ENCODE measurements at regions of chr11 and their contacts with region 1.

Region 1: GRCh38 chr11:35617687-35618496 is at the start of gene FJX1:
- H3K4me3 Mint-ChIP-seq: peak within 1 kb of the TSS; percentile 74
- H3K27ac Mint-ChIP-seq: peak within 1 kb of the TSS; percentile 60
- H3K4me1 Mint-ChIP-seq: peaks cover 18% of the 10 kb centered on the region
- H3K27me3 Mint-ChIP-seq: peaks cover 66% of the 10 kb centered on the region

Region 2: DNA sequence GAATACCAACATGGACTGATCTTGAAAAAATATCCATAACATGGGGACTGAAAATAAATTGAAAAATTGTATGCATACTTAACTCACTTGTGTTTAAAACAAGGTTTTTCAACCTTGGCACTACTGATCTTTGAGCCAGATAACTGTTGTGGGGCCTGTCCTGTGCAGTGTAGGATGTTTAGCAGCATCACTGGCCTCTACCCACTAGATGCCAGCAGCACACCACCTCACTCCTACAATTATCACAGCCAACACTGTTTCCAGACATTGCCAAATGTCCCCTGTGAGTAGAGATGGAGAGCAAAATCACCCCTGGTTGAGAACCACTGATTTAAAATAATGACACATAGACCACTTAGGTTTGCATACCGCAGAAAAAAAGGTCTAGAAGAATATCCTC is 153.6 kb before region 1 on chr11:
- intact Hi-C with region 1: no loop called
- H3K4me3 Mint-ChIP-seq: no peak overlapping the region
- H3K27ac Mint-ChIP-seq: no peak overlapping the region
- H3K4me1 Mint-ChIP-seq: no peaks in the 10 kb centered on the region
- H3K27me3 Mint-ChIP-seq: peaks cover 13% of the 10 kb centered on the region

Region 3: DNA sequence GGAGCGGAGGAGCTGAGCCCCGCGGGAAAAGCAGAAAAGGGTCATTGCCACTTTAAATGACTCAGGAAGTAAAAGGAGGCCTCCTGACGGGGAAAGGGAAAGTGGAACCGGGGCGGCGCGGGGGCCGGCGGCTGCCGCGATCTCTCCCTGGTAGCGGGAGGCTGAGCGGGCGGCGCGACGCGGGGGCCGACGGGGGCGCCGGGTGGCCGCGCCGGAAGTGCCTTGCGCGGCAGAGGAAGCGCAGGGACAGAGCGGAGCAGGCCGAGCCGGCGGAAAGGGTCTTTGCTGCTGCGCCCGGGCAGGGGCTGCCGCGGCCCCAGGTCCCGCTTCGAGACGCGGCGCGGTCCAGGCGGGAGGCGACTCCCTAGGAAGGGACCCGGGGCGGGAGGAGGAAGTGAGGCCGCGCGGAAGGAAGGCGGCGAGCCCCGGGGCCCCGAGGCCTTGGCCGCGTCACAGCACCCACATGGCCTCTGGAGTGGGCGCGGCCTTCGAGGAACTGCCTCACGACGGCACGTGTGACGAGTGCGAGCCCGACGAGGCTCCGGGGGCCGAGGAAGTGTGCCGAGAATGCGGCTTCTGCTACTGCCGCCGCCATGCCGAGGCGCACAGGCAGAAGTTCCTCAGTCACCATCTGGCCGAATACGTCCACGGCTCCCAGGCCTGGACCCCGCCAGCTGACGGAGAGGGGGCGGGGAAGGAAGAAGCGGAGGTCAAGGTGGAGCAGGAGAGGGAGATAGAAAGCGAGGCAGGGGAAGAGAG is 44.9 kb after region 1 on chr11 and contains the start of gene TRIM44:
- intact Hi-C with region 1: loop called (anchors 5 kb)
- H3K4me3 Mint-ChIP-seq: peak within 1 kb of the TSS; percentile 87
- H3K27ac Mint-ChIP-seq: peak within 1 kb of the TSS; percentile 91
- H3K4me1 Mint-ChIP-seq: peaks cover 34% of the 10 kb centered on the region
- H3K27me3 Mint-ChIP-seq: peaks cover 18% of the 10 kb centered on the region

Region 4: GRCh38 chr11:36056160-36056751 is 438.4 kb after region 1 on chr11:
- intact Hi-C with region 1: loop called (anchors 5 kb)
- H3K4me3 Mint-ChIP-seq: no peak overlapping the region
- H3K27ac Mint-ChIP-seq: no peak overlapping the region
- H3K4me1 Mint-ChIP-seq: peaks cover 13% of the 10 kb centered on the region
- H3K27me3 Mint-ChIP-seq: peaks cover 4% of the 10 kb centered on the region

Region 5: DNA sequence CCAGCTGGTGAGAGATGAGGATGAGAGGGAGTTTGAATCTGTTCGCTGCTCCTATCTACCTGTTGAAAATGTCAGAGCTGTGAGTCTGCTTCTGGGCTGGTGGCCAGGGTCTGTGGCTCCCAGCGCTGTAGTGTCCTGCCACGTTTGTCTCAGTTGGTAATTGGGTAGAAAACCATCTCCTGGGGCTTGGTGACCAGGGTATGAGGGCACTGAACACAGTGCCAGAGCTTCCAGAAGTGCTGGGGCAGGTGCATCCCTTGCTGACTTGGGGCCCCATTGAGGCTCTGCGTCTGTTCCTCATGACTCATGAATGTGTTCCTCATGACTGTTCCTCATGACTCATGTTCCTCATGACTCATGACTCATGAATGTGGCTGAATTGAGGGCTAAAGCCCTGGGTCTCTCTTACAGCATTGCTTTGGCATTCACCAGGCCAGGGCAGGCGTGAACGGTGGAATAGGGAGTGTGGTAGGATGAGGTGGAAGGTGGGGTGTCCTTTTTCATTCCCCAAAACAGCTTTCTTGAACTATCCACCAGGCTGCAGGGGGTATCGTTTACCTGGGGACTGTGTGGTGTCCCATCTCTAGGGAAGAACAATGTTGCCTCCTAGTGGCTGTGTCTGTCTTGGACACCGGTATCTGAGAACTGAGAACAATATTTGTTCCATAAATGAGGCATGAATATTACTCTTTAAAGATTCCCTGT is 531.8 kb after region 1 on chr11:
- intact Hi-C with region 1: loop called (anchors 2 kb)
- H3K4me3 Mint-ChIP-seq: peak overlapping the region; percentile 47
- H3K27ac Mint-ChIP-seq: peak overlapping the region; percentile 72
- H3K4me1 Mint-ChIP-seq: peaks cover 42% of the 10 kb centered on the region
- H3K27me3 Mint-ChIP-seq: peaks cover 2% of the 10 kb centered on the region

Region 6: GRCh38 chr11:36265793-36266628 is 648.1 kb after region 1 on chr11:
- intact Hi-C with region 1: loop called (anchors 1 kb)
- H3K4me3 Mint-ChIP-seq: no peak overlapping the region
- H3K27ac Mint-ChIP-seq: no peak overlapping the region
- H3K4me1 Mint-ChIP-seq: no peaks in the 10 kb centered on the region
- H3K27me3 Mint-ChIP-seq: peaks cover 19% of the 10 kb centered on the region